ENCODE measurements at regions of chr10 and their contacts with region 1.

Region 1: DNA sequence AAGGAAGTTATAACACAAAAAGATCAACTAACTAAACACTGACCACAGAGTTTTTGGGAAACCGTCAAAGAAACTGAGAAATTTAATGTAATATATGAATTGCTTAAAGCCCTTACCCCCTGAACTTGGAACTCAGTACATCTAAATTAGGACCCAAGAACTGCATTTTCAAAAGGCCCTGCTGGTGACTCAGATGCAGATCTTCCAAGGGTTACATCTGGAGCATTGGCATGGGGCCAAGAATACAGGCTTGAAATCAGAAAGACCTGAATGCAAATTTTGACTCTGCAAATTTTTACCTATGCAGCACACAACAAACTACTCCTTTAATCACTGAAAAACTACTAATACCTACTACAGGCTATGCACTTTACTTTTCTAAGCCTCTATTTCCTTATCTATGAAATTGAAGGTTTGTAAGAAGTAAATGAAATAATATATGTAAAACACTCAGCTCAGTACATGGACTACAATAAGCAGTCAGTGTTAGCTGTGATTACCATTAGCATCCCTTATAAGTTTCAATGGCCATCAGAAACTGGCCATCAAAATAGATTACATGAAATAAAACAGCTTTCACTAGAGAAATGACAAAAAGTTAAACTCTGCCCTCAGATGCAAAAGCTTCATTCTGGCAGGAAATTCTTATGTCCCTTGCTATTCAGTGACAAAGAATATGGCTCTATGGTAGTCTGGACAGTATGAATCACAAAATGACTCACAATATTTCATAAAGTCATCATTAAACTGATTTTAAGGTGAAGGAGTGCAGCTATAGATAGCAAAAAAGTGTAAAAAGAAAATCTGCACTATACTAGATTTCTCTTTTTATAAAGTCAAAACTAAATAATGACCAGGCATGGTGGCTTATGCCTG is 43.6 kb downstream of the NSUN6 start:
- DNase-seq: peak; percentile 79
- H3K4me3 ChIP-seq: no peak overlapping the region
- CTCF ChIP-seq: no peak

Region 2: DNA sequence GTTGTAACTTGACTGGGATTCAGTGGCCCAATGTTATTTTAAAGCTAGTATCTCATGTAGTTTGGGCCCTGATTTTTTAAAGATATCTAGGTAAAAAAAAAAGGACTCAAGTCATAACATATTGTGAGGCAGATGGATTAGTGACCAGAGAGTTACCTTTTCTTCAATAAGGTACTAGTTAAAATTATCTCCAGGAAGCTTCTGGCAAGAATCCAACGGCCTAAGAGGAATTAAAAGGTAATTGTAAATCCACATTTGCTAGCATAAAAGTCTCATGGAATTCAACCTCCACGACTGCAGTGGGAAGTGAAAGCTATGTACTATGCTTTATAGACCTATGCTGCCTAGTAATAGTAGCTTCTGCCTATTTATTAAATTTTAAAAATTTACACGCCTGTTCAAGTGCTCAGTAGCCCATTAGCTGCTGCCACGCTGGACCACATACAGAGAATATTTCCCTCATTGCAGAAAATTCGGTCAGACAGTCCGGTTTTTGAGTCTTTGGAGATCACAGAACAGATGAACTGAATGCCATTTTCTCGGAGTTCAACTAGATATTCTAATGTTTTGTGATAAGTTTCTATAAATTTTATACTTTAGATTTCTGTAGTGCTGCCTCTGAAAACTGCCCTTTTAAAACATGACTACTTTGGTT is 74.7 kb before region 1 on chr10:
- in situ Hi-C with region 1: loop called (anchors 10 kb)
- DNase-seq: no peak
- H3K4me3 ChIP-seq: no peak overlapping the region
- CTCF ChIP-seq: no peak

Measured in astrocyte of the cerebellum (primary cell).